Left colon (tissue), 2 donors: ENCODE measurements at regions of chr1 and their contacts with region 1.

Region 1: GRCh38 chr1:116574581-116575291 is 3.9 kb upstream of the CD58 start:
- DNase-seq: peak in 1 of 2 donors; percentile 58
- ATAC-seq: no peak

Region 2: DNA sequence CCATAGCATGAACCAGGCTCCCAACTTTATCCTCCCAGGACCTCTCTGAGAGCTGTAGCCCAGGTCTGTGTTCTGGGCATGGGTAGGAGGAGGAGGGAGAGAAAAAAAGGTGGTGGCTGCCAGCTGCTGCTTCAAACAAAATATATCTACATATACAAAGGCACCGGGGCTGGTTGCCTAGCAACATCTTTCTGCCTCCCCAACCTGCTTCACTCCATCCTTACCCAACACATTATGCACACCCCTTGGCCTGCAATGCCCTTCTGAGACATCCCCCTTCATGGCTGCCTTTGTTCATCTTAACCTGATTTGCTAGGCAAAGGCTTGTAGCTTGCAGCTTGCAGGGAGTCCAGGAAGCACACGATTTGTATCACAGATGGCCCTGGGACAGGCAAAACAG is 228.9 kb before region 1 on chr1:
- intact Hi-C with region 1: no loop called
- DNase-seq: no peak
- ATAC-seq: no peak

Region 3: GRCh38 chr1:117054068-117054467 is 479.3 kb after region 1 on chr1:
- intact Hi-C with region 1: loop called in 1 of 2 experiments (anchors 2 kb)
- DNase-seq: no peak
- ATAC-seq: no peak